K562 (cell line): ENCODE measurements at regions of chr16 and their contacts with region 1.

Region 1: GRCh38 chr16:3712861-3713372 is 4.4 kb downstream of the TRAP1 start:
- DNase-seq: no peak
- ATAC-seq: no peak
- H3K4me3 ChIP-seq: no peak overlapping the region
- H3K27ac ChIP-seq: no peak overlapping the region; the same call in 2 of the 3 replicates
- H3K4me1 ChIP-seq: peaks cover 19 to 39% of the 10 kb centered on the region in 2 experiments
- H3K27me3 ChIP-seq: no peaks in the 10 kb centered on the region
- CTCF ChIP-seq: no peak
- EP300 ChIP-seq: no peak
- POLR2A ChIP-seq: no peak
- RAD21 ChIP-seq: no peak

Region 2: DNA sequence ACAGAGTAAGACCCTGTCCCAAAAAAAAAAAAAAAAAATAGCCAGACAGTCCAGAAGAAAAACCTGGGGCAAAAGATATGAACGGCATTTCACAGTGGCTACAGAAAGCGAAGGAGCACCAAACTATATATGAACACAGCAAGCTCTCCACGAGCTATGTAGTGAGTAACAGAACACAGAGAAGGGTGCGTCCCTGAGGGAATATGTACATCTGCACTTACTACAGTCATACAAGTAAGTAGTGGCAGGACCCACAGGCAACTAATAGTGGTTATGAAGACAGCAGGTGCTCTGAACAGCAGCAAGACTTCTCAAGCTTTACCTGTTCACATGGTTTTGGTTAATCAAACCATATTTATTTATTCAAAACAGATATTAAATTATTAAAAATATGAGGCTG is 11.4 kb before region 1 on chr16:
- CTCF ChIA-PET with region 1: no interaction called
- POLR2A ChIA-PET with region 1: interaction called, 15 read pairs
- in situ Hi-C with region 1: no loop called
- intact Hi-C with region 1: no loop called
- DNase-seq: no peak
- ATAC-seq: no peak
- H3K4me3 ChIP-seq: no peak overlapping the region
- H3K27ac ChIP-seq: no peak overlapping the region
- H3K4me1 ChIP-seq: peaks cover 8 to 15% of the 10 kb centered on the region in 2 experiments; a peak in 4 of 5 replicates
- H3K27me3 ChIP-seq: no peaks in the 10 kb centered on the region
- CTCF ChIP-seq: no peak
- EP300 ChIP-seq: no peak
- POLR2A ChIP-seq: no peak
- RAD21 ChIP-seq: no peak